ENCODE measurements at regions of chr14 and their contacts with region 1.

Region 1: DNA sequence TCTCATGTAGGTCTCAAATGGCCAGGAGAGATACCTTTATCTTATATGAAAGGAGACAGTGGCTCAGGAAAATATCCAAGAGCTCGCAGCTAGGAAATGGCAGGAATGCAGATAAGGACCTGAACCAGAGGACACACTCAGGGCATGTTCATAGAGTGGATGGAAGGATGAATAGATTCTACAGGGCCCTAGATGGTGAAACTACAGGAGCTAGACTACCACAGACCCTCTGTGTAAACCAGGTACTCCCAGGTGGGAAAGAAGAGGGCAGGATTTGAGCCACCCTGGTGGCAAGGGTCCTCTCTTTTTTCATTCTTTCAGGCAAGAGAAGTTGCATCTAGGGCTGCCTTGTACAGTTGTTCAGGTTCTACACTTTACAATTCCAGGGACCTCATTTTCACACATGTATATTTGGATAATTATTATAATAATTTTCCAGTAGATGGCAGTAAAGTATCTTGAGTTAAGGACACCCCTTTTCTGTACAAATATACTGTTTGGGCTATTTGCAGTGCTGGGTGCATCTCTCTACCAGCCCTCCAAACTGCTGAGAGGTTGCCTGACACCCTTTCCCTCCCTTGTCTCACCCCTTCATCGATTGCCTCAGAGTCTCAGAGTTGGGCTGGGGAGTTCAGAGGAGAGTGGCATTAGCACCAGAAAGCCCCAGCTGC is 10.5 kb upstream of the ZDHHC22 start:
- DNase-seq: no peak
- H3K4me3 Mint-ChIP-seq: no peak overlapping the region
- H3K27ac Mint-ChIP-seq: no peak overlapping the region
- H3K4me1 Mint-ChIP-seq: no peaks in the 10 kb centered on the region
- H3K27me3 Mint-ChIP-seq: peaks cover 32% of the 10 kb centered on the region

Region 2: GRCh38 chr14:76784266-76785264 is 367.5 kb before region 1 on chr14:
- intact Hi-C with region 1: no loop called
- DNase-seq: peak; percentile 88
- H3K4me3 Mint-ChIP-seq: no peak overlapping the region
- H3K27ac Mint-ChIP-seq: peak overlapping the region; percentile 20
- H3K4me1 Mint-ChIP-seq: peaks cover 38% of the 10 kb centered on the region
- H3K27me3 Mint-ChIP-seq: no peaks in the 10 kb centered on the region

Region 3: DNA sequence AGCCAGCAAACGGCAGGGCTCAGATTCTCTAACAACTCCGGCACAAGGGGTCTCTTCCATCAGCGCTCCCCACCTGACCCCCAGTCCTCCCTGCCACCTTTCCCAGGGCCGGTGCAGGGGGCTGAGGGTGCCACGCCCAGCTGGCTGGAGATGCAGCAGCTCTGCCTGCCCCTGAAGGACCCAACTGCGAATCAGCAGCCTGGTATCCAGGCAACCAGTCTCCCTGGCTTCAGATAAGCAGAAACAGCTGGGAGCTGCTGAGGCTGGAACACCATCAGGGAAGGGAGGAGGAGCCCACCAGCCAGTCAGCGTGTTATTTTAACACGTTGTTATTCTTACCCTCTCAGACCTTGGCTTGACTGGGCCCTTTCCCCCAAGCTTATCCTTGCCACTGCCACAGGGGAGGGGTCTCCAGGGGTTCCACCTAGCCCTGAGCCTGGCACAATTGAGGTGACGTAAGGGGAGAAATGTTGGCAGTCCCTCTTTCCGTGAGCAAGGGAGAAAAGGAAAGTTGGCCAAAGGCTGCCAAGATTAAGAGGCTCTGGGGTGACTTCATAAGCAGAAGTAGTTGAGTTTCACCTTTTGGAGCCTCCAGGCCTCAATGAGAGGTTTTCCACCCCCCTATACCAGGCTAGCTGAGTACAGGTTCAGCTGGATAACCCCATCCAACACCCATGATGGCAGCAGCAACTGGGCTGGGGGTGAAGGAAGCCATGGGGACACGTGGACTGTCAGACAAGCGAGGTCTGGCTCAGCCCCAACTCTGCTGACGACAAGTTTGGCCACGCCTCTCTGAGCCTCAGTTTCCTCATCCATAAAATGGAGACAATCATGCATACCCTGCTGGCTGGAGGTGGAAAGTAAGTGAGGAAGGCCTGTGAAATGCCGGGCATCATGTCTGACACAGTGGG is 214.6 kb before region 1 on chr14:
- intact Hi-C with region 1: no loop called
- DNase-seq: no peak
- H3K4me3 Mint-ChIP-seq: no peak overlapping the region
- H3K27ac Mint-ChIP-seq: no peak overlapping the region
- H3K4me1 Mint-ChIP-seq: peaks cover 14% of the 10 kb centered on the region
- H3K27me3 Mint-ChIP-seq: no peaks in the 10 kb centered on the region

Region 4: GRCh38 chr14:77212943-77213678 is 61.1 kb after region 1 on chr14:
- intact Hi-C with region 1: loop called (anchors 5 kb)
- DNase-seq: peak; percentile 81
- H3K4me3 Mint-ChIP-seq: no peak overlapping the region
- H3K27ac Mint-ChIP-seq: no peak overlapping the region
- H3K4me1 Mint-ChIP-seq: no peaks in the 10 kb centered on the region
- H3K27me3 Mint-ChIP-seq: peaks cover 4% of the 10 kb centered on the region

Measured in activated CD4-positive, alpha-beta T cell treated with anti-CD3 and anti-CD28 coated beads, Interleukin-2, amount 10 ng/mL, durations not matched to agents 24 days and 14 days (primary cell).